Common myeloid progenitor, CD34-positive (primary cell): ENCODE measurements at regions of chr5 and their contacts with region 1.

Region 1: DNA sequence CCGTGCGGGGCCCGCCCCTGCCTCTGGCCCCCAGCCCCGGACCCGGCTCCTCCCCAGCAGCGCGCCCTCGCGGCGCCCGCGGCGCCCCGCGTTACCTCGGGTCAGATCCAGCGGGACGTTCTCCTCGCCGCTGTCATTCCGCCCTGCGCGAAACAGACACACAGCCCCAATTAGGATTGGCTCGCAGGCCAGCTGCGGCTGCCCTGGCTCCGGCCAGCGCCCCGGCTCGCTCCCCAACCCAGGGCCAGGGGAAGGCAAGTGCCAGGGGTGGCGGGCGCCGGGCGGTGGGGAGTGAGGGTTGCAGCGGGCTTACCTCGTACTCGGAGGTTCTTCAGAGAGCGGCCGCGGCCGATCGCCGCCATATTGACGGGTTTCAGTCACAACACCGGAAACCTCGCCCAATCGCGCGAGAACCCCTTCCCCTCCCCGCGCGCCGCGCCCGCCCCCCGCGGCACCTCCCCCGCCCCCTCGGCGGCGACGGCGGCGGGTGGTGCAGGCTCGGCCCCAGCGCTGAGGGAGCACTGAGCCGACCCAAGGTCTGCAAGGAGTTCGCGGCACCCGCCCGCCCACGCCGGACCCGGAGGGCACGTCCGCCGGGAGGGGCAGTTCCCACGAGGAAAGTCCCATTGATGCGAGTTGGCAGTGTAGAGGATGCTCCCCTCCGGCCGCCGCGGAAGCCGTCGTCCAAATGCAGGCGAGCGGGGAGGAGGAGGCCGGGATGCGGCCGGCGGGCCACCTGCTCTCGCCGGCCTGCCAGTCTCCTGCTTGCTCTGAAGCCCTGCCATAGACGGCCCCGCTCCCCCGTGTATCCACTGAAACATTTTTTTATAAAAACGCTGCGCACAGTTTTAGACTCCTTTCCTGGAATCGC is at the start of gene RICTOR:
- DNase-seq: peak; percentile 85 to 92 (median 92)
- H3K4me3 ChIP-seq: peak within 1 kb of the TSS; percentile 82 to 97 (median 91)
- H3K27ac ChIP-seq: peak within 1 kb of the TSS; percentile 96 to 97
- H3K4me1 ChIP-seq: peaks cover 14 to 49% (median 33%) of the 10 kb centered on the region in 4 experiments
- H3K27me3 ChIP-seq: no peaks in the 10 kb centered on the region

Region 2: DNA sequence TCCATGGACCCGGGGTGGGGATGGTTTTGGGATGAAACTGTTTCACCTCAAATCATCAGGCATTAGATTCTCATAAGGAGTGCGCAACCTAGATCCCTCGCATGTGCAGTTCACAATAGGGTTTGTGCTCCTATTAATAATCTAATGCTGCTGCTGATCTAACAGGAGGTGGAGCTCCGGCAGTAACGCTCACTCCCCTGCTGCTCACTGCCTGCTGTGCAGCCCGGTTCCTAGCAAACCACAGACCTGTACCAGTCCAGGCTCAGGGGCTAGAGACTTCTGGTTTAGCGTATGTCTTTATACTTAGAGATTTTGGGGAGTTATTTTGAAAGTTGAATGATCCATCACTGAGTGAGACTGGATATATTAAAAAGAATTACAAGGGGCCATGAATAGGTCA is 50.2 kb before region 1 on chr5:
- CTCF ChIA-PET with region 1: no interaction called
- POLR2A ChIA-PET with region 1: no interaction called
- DNase-seq: no peak
- H3K4me3 ChIP-seq: no peak overlapping the region
- H3K27ac ChIP-seq: no peak overlapping the region
- H3K4me1 ChIP-seq: no peaks in the 10 kb centered on the region
- H3K27me3 ChIP-seq: no peaks in the 10 kb centered on the region

Region 3: DNA sequence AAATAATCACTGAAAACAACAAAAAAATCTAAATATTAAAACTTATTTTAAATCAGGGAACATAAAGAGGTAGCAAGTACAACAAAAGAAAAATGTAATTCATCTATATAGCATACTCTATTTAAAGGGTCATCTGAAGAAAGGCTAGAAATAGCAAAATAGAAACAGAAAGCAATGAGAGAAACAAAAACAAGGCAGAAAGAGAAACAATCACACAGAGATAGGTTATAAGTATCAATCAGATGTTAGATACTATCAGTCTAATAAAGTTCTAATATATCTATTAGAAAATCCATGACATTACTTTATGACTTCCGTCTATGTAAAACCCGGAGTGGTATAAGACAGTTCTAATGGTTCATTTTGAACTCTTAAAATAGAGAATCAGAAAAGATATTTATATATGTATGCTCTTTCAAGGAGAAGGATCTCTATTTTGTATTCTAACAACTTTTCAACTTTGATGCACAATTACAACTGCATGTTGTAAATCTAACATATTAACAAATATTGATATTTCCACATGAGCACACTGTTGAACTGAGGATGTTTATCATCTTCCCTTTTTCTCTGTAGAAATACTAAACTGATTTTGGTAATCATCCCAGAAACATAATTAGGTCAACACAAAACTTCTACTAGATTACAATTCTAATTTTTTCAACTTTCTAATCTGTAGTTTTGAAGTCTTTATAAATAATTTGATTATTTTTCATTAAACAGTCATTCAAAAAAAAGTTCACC is 15.9 kb before region 1 on chr5:
- CTCF ChIA-PET with region 1: interaction called, 11 read pairs
- POLR2A ChIA-PET with region 1: interaction called, 4 read pairs
- DNase-seq: no peak
- H3K4me3 ChIP-seq: peak overlapping the region in 6 of 7 experiments; percentile 33 to 71 (median 54)
- H3K27ac ChIP-seq: peak overlapping the region; percentile 47 to 77
- H3K4me1 ChIP-seq: peaks cover 0 to 29% (median 11%) of the 10 kb centered on the region in 4 experiments
- H3K27me3 ChIP-seq: no peaks in the 10 kb centered on the region